ENCODE measurements at regions of chr6 and their contacts with region 1.

Region 1: DNA sequence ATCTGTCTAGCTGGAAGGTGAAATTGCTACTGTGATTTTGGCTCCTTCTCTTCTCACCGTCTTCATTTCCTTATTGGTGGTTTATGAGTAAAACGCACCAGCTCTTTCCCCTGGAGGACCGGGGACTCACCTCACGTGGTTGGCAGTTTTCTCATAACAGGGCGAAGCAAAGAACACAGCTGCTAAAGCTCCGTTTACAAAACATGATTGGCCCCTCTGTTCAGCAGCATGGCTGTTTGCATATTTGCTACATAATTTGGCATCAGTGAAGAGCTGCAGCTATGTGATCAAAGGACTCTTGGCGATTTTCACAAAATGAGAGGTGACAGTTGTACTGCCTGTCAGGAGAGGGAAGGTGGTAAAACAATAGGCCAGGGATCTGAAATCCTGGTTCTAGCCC is 20.5 kb upstream of the TMEM181 start:
- DNase-seq: no peak

Region 2: DNA sequence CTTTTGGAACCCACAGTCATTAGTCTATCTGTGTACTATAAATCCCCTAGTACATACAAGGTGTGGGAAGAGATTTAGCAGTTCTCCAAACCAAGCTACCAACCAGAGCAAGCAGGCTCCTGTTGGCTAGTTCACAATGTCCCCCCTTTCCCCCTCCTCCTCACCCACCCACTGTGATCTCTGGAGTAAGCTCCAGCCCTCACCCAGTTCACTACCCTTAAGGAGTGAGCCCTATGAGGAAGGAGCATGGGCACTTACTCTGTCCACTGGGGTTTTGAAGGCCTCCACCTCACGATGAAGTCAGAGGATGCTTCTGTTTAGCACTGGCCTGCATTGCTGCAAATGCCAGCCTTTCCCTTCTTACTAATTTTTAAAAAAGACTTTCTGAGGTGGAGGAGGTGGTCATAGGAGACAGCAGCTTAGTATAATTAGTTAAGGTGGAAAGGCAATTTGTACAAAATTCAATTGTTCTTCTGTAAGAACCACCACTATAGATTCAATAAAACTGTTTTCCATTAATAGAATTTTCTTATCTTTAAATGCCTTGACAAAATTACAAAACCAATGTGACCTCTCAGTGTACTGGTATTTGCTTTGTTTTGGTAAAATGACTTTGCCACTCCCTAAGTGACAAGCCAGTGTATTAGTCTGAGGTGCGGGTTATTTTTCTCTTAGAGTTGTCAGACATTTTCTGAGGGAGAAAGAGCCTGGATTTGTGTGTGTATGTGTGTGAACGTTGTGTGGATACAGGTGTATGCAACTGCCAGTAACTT is 141.0 kb before region 1 on chr6:
- CTCF ChIA-PET with region 1: no interaction called
- POLR2A ChIA-PET with region 1: no interaction called
- DNase-seq: no peak

Region 3: GRCh38 chr6:158552796-158553138 is 13.4 kb after region 1 on chr6:
- CTCF ChIA-PET with region 1: interaction called, 10 read pairs
- POLR2A ChIA-PET with region 1: no interaction called
- DNase-seq: no peak